Activated CD4-positive, alpha-beta memory T cell treated with anti-CD3 and anti-CD28 coated beads for 36 hours (primary cell): ENCODE measurements at regions of chr5 and their contacts with region 1.

Region 1: GRCh38 chr5:151239237-151239861 is 13.6 kb upstream of the GM2A start:
- DNase-seq: peak; percentile 67
- H3K4me3 Mint-ChIP-seq: no peak overlapping the region
- H3K27ac Mint-ChIP-seq: no peak overlapping the region
- H3K4me1 Mint-ChIP-seq: peaks cover 26% of the 10 kb centered on the region
- H3K27me3 Mint-ChIP-seq: no peaks in the 10 kb centered on the region

Region 2: GRCh38 chr5:151223469-151224264 is 15.7 kb before region 1 on chr5 and contains the start of gene CCDC69:
- CTCF ChIA-PET with region 1: interaction called, 15 read pairs
- POLR2A ChIA-PET with region 1: interaction called, 4 read pairs
- intact Hi-C with region 1: loop called (anchors 2 kb)
- DNase-seq: peak; percentile 70
- H3K4me3 Mint-ChIP-seq: peak within 1 kb of the TSS; percentile 89
- H3K27ac Mint-ChIP-seq: peak within 1 kb of the TSS; percentile 86
- H3K4me1 Mint-ChIP-seq: peaks cover 51% of the 10 kb centered on the region
- H3K27me3 Mint-ChIP-seq: no peaks in the 10 kb centered on the region
- total RNA-seq, gene CCDC69: 24.6 to 27.6 TPM

Region 3: GRCh38 chr5:151258191-151258611 is 18.9 kb after region 1 on chr5:
- CTCF ChIA-PET with region 1: no interaction called
- POLR2A ChIA-PET with region 1: no interaction called
- intact Hi-C with region 1: no loop called
- DNase-seq: no peak
- H3K4me3 Mint-ChIP-seq: no peak overlapping the region
- H3K27ac Mint-ChIP-seq: no peak overlapping the region
- H3K4me1 Mint-ChIP-seq: peaks cover 28% of the 10 kb centered on the region
- H3K27me3 Mint-ChIP-seq: no peaks in the 10 kb centered on the region